Dorsolateral prefrontal cortex (tissue), 120 donors: ENCODE measurements at regions of chr16 and their contacts with region 1.

Region 1: GRCh38 chr16:11698271-11698689 is 30.0 kb downstream of the SNN start:
- DNase-seq: no peak
- H3K4me3 ChIP-seq: no peak overlapping the region
- H3K27ac ChIP-seq: peak overlapping the region in 51 of 59 donors; percentile 1 to 93 (median 69)
- H3K27me3 ChIP-seq: no peaks in the 10 kb centered on the region
- CTCF ChIP-seq: no peak

Region 2: GRCh38 chr16:11032922-11033291 is 665.4 kb before region 1 on chr16:
- intact Hi-C with region 1: no loop called
- DNase-seq: no peak
- H3K4me3 ChIP-seq: no peak overlapping the region
- H3K27ac ChIP-seq: peak overlapping the region in 4 of 59 donors; percentile 15 to 60 (median 32)
- H3K27me3 ChIP-seq: no peaks in the 10 kb centered on the region
- CTCF ChIP-seq: no peak

Region 3: GRCh38 chr16:11526655-11527350 is 171.5 kb before region 1 on chr16:
- intact Hi-C with region 1: loop called in 1 of 2 experiments (anchors 10 kb)
- DNase-seq: no peak
- H3K4me3 ChIP-seq: peak overlapping the region in 9 of 59 donors; percentile 0 to 36 (median 22)
- H3K27ac ChIP-seq: no peak overlapping the region
- H3K27me3 ChIP-seq: peaks cover 0 to 5% (median 0%) of the 10 kb centered on the region in 45 donors
- CTCF ChIP-seq: no peak